ENCODE measurements at regions of chr3 and their contacts with region 1.

Region 1: GRCh38 chr3:172065967-172066762 is 26.8 kb downstream of the FNDC3B start:
- DNase-seq: no peak
- ATAC-seq: no peak
- H3K4me3 ChIP-seq: no peak overlapping the region
- H3K4me3 Mint-ChIP-seq: peak overlapping the region in 3 of 10 donors; percentile 8 to 80 (median 63)
- H3K27ac ChIP-seq: no peak overlapping the region
- H3K27ac Mint-ChIP-seq: peak overlapping the region in 1 of 9 donors; percentile 5
- H3K4me1 ChIP-seq: peaks cover 0 to 17% of the 10 kb centered on the region in 2 donors
- H3K4me1 Mint-ChIP-seq: peaks cover 28 to 64% (median 51%) of the 10 kb centered on the region in 7 donors
- H3K27me3 ChIP-seq: no peaks in the 10 kb centered on the region
- H3K27me3 Mint-ChIP-seq: no peaks in the 10 kb centered on the region

Region 2: GRCh38 chr3:171729452-171730334 is 336.5 kb before region 1 on chr3:
- CTCF ChIA-PET with region 1: no interaction called
- POLR2A ChIA-PET with region 1: no interaction called
- intact Hi-C with region 1: no loop called
- DNase-seq: no peak
- ATAC-seq: no peak
- H3K4me3 ChIP-seq: no peak overlapping the region
- H3K4me3 Mint-ChIP-seq: no peak overlapping the region
- H3K27ac ChIP-seq: no peak overlapping the region
- H3K27ac Mint-ChIP-seq: no peak overlapping the region
- H3K4me1 ChIP-seq: no peaks in the 10 kb centered on the region
- H3K4me1 Mint-ChIP-seq: no peaks in the 10 kb centered on the region
- H3K27me3 ChIP-seq: no peaks in the 10 kb centered on the region
- H3K27me3 Mint-ChIP-seq: peaks cover 0 to 12% (median 6%) of the 10 kb centered on the region in 5 donors

Region 3: GRCh38 chr3:172047567-172048115 is 18.5 kb before region 1 on chr3:
- CTCF ChIA-PET with region 1: no interaction called
- POLR2A ChIA-PET with region 1: interaction called, 5 read pairs
- intact Hi-C with region 1: loop called in 1 of 2 experiments (anchors 2 kb)
- DNase-seq: no peak
- ATAC-seq: no peak
- H3K4me3 ChIP-seq: no peak overlapping the region
- H3K4me3 Mint-ChIP-seq: no peak overlapping the region
- H3K27ac ChIP-seq: no peak overlapping the region
- H3K27ac Mint-ChIP-seq: peak overlapping the region in 2 of 9 donors; percentile 1 to 25
- H3K4me1 ChIP-seq: no peaks in the 10 kb centered on the region
- H3K4me1 Mint-ChIP-seq: peaks cover 8 to 49% (median 29%) of the 10 kb centered on the region in 7 donors
- H3K27me3 ChIP-seq: no peaks in the 10 kb centered on the region
- H3K27me3 Mint-ChIP-seq: no peaks in the 10 kb centered on the region

Region 4: GRCh38 chr3:172134352-172134751 is 68.2 kb after region 1 on chr3:
- CTCF ChIA-PET with region 1: no interaction called
- POLR2A ChIA-PET with region 1: no interaction called
- intact Hi-C with region 1: no loop called
- DNase-seq: no peak
- ATAC-seq: no peak
- H3K4me3 ChIP-seq: no peak overlapping the region
- H3K4me3 Mint-ChIP-seq: peak overlapping the region in 1 of 10 donors; percentile 15
- H3K27ac ChIP-seq: no peak overlapping the region
- H3K27ac Mint-ChIP-seq: peak overlapping the region in 2 of 9 donors; percentile 26 to 60
- H3K4me1 ChIP-seq: peaks cover 8 to 49% of the 10 kb centered on the region in 2 donors
- H3K4me1 Mint-ChIP-seq: peaks cover 27 to 78% (median 68%) of the 10 kb centered on the region in 7 donors
- H3K27me3 ChIP-seq: no peaks in the 10 kb centered on the region
- H3K27me3 Mint-ChIP-seq: no peaks in the 10 kb centered on the region